ENCODE measurements at regions of chr2 and their contacts with region 1.

Region 1: GRCh38 chr2:135741395-135742324 is at the start of gene UBXN4:
- DNase-seq: peak; percentile 99
- ATAC-seq: peak; percentile 90
- H3K4me3 ChIP-seq: peak within 1 kb of the TSS; percentile 83
- H3K27ac ChIP-seq: peak within 1 kb of the TSS; percentile 100
- H3K4me1 ChIP-seq: peaks cover 8% of the 10 kb centered on the region
- H3K27me3 ChIP-seq: no peaks in the 10 kb centered on the region
- CTCF ChIP-seq: peak; percentile 54
- POLR2A ChIP-seq: peak; percentile 94
- RAD21 ChIP-seq: no peak
- total RNA-seq, gene UBXN4: 49.1 and 64.7 TPM in 2 replicates

Region 2: GRCh38 chr2:135052042-135052876 is 689.4 kb before region 1 on chr2 and contains the start of gene RAB3GAP1:
- CTCF ChIA-PET with region 1: no interaction called
- POLR2A ChIA-PET with region 1: no interaction called
- dilution Hi-C with region 1: no loop called
- in situ Hi-C with region 1: no loop called
- intact Hi-C with region 1: loop called (anchors 5 kb)
- DNase-seq: peak; percentile 83
- ATAC-seq: peak; percentile 94
- H3K4me3 ChIP-seq: peak within 1 kb of the TSS; percentile 71
- H3K27ac ChIP-seq: peak within 1 kb of the TSS; percentile 82
- H3K4me1 ChIP-seq: no peaks in the 10 kb centered on the region; the same call in 1 of the 2 replicates
- H3K27me3 ChIP-seq: peaks cover 3% of the 10 kb centered on the region; the same call in 1 of the 2 replicates
- CTCF ChIP-seq: no peak
- POLR2A ChIP-seq: peak; percentile 94
- RAD21 ChIP-seq: no peak
- total RNA-seq, gene RAB3GAP1: 65.8 and 85.5 TPM in 2 replicates

Region 3: GRCh38 chr2:135694711-135695110 is 46.9 kb before region 1 on chr2:
- CTCF ChIA-PET with region 1: no interaction called
- POLR2A ChIA-PET with region 1: no interaction called
- dilution Hi-C with region 1: no loop called
- in situ Hi-C with region 1: no loop called
- intact Hi-C with region 1: no loop called
- DNase-seq: peak; percentile 7
- ATAC-seq: no peak; the same call in 1 of the 2 replicates
- H3K4me3 ChIP-seq: no peak overlapping the region
- H3K27ac ChIP-seq: no peak overlapping the region
- H3K4me1 ChIP-seq: no peaks in the 10 kb centered on the region
- H3K27me3 ChIP-seq: no peaks in the 10 kb centered on the region
- CTCF ChIP-seq: no peak
- POLR2A ChIP-seq: no peak
- RAD21 ChIP-seq: no peak

Region 4: DNA sequence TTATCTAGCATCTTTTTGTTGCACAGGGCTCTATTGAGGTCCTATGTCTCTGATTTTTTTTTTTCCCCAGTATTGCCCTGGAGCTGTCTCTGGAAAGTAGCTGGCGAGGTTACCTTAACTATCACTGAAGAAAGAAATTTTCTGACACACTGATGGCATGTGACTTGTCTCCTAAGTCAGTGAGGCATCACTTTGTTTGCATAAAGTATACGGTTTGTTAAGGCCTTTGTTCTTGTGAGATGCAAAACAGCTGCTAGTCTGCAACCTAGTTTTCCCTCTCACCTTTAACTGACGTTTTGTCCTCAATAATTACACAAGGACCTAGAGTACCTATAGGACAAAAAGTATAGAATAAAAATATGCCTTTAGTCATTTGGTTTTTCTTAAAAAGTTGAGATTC is 41.8 kb after region 1 on chr2:
- CTCF ChIA-PET with region 1: interaction called, 3 read pairs
- POLR2A ChIA-PET with region 1: no interaction called
- dilution Hi-C with region 1: no loop called
- in situ Hi-C with region 1: no loop called
- intact Hi-C with region 1: loop called (anchors 5 kb)
- DNase-seq: no peak
- ATAC-seq: no peak
- H3K4me3 ChIP-seq: no peak overlapping the region
- H3K27ac ChIP-seq: no peak overlapping the region
- H3K4me1 ChIP-seq: peaks cover 7% of the 10 kb centered on the region
- H3K27me3 ChIP-seq: no peaks in the 10 kb centered on the region
- CTCF ChIP-seq: no peak
- POLR2A ChIP-seq: no peak
- RAD21 ChIP-seq: no peak

Measured in IMR-90 (cell line).